Prostate gland (tissue), 2 donors: ENCODE measurements at regions of chr2 and their contacts with region 1.

Region 1: DNA sequence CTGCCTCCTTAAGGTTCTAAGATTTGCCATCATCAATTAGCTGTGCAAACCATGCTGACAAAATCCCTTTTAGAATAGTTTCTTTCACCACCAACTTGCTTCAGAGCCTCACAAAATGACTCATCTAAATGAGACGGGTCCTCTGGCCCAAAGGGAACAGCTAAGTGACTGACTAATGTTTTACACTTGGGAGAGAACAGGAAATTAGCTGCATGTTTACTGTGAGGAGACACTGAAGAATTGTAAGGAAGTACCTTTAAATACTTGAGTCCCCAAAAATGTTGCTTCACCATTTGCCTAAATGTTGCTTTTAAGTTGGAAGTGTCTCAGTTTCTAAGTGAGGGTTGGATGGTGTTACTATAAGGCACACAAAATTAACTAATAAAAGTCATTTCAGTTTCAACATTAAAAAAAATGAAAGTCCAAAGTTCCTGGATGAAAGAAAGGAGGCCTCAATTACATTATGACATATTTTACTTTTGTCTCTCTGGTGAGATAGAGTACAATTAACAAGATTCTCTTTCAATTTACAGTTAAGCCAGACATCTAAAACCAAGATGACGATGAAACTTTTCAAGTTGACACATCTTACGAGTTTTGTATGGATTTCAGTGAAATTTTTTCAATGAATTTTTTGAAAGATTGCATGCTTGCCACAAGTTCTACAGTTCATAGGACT is 229.1 kb upstream of the FN1 start:
- DNase-seq: no peak
- H3K4me3 ChIP-seq: no peak overlapping the region
- H3K27ac ChIP-seq: no peak overlapping the region
- H3K4me1 ChIP-seq: no peaks in the 10 kb centered on the region
- H3K27me3 ChIP-seq: no peaks in the 10 kb centered on the region
- CTCF ChIP-seq: no peak
- POLR2A ChIP-seq: no peak

Region 2: DNA sequence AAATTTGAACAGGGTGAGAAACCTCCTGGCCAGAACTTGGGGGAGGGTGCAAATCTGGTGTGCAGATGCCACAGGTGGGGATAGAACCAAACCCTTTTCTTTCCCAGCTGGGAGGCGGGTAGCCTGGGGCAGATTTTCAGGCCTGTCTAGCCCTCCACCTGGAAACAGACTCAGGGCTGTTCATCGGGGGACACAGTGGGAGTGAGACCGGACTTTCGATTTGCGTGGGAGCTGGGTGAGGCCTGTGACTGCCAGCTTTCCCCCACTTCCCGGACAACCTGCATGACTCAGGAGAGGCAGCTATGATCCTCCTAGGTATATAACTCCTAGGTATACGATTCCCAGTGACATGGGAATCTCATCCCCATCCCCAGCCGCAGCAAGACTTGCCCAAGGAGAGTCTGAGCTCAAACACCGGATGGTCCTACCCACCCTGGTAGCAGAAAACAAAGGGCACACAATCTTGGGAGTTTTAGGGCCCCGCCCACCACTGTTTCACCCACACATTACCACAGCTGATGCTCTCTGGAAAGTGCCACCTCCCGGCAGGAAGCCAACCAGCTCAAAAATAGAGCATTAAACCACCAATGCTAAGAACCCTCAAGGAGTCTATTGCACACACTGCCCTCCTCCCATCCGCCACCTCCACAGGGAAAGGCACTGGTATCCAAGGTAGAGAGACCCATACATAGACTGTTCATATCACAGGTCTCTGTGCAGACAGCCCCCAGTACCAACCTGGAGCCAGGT is 948.0 kb before region 1 on chr2:
- intact Hi-C with region 1: no loop called
- DNase-seq: no peak
- H3K4me3 ChIP-seq: no peak overlapping the region
- H3K27ac ChIP-seq: no peak overlapping the region
- H3K4me1 ChIP-seq: no peaks in the 10 kb centered on the region
- H3K27me3 ChIP-seq: no peaks in the 10 kb centered on the region
- CTCF ChIP-seq: no peak
- POLR2A ChIP-seq: no peak

Region 3: DNA sequence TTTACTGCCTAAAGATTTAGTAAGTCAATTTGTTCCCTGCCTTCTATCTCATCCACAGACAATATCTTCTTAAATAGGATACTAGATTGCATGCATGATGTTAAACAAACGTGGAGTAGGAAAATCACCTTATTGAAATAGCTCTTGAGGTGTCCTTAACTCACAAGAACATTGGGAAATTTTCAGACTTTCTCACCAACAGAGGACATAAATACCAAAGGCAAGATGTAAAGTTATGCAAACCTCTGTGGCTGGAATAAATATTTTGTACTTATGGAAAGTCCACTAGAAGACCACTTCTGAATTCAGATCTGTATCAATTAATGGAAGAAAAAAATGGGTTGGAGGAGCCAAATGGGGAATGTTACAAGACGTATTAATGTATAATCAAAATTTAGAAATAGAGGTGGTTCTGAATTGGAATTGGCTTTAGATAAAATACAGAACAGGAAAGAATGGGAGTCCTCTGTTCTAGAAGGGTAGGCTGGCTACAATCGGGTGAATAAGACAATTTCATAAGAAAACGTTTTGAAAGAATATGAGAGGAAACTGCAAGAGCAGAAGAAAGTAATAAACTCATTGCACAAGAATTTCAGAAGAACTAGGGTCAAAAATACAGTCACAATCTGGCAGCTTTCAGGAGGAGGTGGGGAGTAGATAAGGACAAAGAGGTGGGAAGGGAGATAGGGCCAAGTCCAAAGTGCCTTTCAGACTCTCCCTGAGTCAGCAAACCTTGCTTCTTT is 159.8 kb before region 1 on chr2:
- intact Hi-C with region 1: no loop called
- DNase-seq: no peak
- H3K4me3 ChIP-seq: no peak overlapping the region
- H3K27ac ChIP-seq: no peak overlapping the region
- H3K4me1 ChIP-seq: no peaks in the 10 kb centered on the region
- H3K27me3 ChIP-seq: no peaks in the 10 kb centered on the region
- CTCF ChIP-seq: no peak
- POLR2A ChIP-seq: no peak

Region 4: GRCh38 chr2:215705771-215706361 is 40.9 kb after region 1 on chr2:
- intact Hi-C with region 1: loop called (anchors 5 kb)
- DNase-seq: peak; percentile 7
- H3K4me3 ChIP-seq: no peak overlapping the region
- H3K27ac ChIP-seq: no peak overlapping the region
- H3K4me1 ChIP-seq: no peaks in the 10 kb centered on the region
- H3K27me3 ChIP-seq: no peaks in the 10 kb centered on the region
- CTCF ChIP-seq: no peak
- POLR2A ChIP-seq: no peak

Region 5: DNA sequence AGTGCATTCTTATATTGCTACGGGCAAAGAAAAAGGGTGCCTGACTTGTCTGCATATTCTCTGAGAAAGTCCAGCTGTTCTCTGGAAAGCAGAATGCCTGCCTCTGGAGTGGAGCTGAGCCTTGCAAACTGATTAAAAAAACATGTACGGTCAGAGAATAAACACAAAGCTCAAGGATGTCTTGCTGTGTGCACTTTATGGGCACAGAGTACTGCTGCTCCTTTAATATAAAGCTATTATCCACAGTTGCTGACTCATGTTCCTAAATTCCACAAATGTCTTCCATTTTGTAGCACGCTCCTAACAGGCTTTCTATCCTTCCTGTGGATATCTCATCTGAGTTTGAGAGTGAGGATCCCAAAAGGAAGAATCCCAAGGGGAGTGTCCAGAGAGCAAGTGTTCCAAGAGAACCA is 119.4 kb after region 1 on chr2:
- intact Hi-C with region 1: loop called (anchors 5 kb)
- DNase-seq: no peak
- H3K4me3 ChIP-seq: no peak overlapping the region
- H3K27ac ChIP-seq: no peak overlapping the region
- H3K4me1 ChIP-seq: no peaks in the 10 kb centered on the region
- H3K27me3 ChIP-seq: no peaks in the 10 kb centered on the region
- CTCF ChIP-seq: no peak
- POLR2A ChIP-seq: no peak